ENCODE measurements at regions of chr19 and their contacts with region 1.

Region 1: GRCh38 chr19:40716655-40717324 is at the starts of genes COQ8B and ITPKC:
- DNase-seq: peak; percentile 100
- ATAC-seq: peak; percentile 70
- H3K4me3 Mint-ChIP-seq: peak within 1 kb of the TSS; percentile 90
- H3K27ac Mint-ChIP-seq: peak within 1 kb of the TSS; percentile 95
- H3K4me1 Mint-ChIP-seq: peaks cover 63% of the 10 kb centered on the region
- H3K27me3 Mint-ChIP-seq: no peaks in the 10 kb centered on the region
- CTCF ChIP-seq: no peak
- total RNA-seq, gene COQ8B: 34.4 and 38.5 TPM in 2 replicates
- total RNA-seq, gene ITPKC: 13.0 and 13.3 TPM in 2 replicates

Region 2: DNA sequence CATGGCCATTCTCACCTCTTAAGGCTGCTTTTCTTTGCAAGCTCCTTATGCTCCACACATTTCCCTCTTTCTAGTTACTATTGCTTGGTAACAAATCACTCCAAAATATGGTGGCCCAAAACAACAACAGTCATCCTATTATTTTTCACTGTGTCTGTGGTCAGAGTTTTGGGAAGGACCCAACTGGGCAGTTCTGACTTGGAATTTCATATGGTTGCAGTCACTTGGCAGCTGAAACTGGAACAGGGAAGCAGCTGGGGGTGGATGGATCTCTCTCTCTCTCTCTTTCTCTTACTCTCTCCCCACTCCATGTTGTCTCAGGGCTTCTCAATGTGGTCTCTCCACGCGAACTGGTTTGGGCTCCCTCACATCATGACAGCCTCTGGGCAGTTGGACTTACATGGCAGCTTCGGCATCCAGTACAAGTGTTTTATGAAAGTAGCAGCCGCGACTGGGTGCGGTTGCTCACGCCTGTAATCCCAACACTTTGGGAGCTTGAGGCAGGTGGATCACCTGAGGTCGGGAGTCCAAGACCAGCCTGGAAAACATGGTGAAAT is 66.0 kb before region 1 on chr19:
- CTCF ChIA-PET with region 1: no interaction called
- POLR2A ChIA-PET with region 1: no interaction called
- intact Hi-C with region 1: no loop called
- DNase-seq: no peak
- ATAC-seq: no peak
- H3K4me3 Mint-ChIP-seq: no peak overlapping the region
- H3K27ac Mint-ChIP-seq: no peak overlapping the region
- H3K4me1 Mint-ChIP-seq: peaks cover 2% of the 10 kb centered on the region
- H3K27me3 Mint-ChIP-seq: peaks cover 4% of the 10 kb centered on the region
- CTCF ChIP-seq: no peak

Region 3: DNA sequence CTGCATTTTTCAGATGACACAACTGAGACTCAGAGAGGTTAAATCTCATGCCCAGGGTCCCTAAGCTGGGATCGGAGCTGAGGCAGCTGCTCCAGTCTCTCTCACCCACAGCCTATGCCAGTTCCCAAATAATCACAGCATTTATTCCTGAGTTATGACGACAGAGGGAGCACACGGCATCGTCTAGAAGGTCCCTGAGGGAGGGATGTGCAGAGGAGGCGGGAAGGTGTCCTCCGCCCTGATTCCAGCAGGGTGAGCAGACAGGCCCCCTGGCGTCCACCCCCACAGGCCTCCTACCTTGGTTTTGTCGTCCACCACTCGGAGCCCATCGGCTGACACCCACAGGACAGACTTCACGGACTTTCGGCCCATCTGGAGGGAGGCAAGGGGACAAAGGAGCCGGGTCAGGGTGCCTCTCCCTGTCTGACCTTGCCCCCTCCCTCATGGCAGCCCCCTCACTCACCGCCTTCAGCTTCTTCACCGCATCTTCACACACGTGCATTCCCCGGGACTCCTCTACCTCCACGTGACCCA is 34.3 kb before region 1 on chr19:
- CTCF ChIA-PET with region 1: no interaction called
- POLR2A ChIA-PET with region 1: interaction called, 3 read pairs
- intact Hi-C with region 1: loop called (anchors 5 kb)
- DNase-seq: no peak
- ATAC-seq: no peak
- H3K4me3 Mint-ChIP-seq: no peak overlapping the region
- H3K27ac Mint-ChIP-seq: no peak overlapping the region
- H3K4me1 Mint-ChIP-seq: peaks cover 3% of the 10 kb centered on the region
- H3K27me3 Mint-ChIP-seq: no peaks in the 10 kb centered on the region
- CTCF ChIP-seq: no peak

Region 4: DNA sequence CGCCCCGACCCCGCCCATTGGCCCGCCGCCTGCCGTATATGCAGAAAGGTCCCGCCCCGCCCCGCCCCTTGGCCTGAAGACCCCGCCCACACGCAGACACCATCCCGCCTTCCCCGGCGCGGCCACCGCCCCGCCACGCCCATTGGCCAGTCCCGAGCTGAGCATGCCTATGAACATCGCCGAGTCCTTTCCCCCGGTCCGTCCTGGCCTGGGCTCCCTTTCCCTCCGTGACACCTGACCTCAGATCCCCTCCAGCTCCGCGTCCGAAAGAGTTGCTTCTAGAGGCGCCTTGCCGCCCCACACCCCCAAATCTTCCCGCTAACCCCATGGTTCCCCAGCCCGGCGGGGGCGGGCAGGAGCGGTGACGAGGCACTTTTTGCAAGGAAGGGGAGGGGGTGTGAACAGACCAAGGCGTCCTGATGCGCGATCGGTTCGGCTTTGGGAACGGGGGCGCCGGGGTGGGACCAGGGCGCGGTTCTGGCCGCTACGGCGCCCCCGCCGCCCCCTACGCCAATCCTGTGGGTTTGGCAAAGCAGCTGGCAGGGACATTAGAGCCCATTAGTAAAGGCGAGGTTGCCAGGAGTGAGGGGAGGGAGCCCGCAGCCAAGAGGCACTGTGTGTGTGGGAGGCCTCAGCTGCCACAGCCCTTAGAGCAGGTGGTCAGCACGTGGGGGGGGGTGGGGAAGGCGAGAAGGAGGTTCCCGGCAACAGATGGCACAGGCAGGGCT is 25.9 kb before region 1 on chr19:
- CTCF ChIA-PET with region 1: no interaction called
- POLR2A ChIA-PET with region 1: interaction called, 14 read pairs
- intact Hi-C with region 1: loop called (anchors 1 kb)
- DNase-seq: peak; percentile 76
- ATAC-seq: peak; percentile 78
- H3K4me3 Mint-ChIP-seq: peak overlapping the region; percentile 95
- H3K27ac Mint-ChIP-seq: peak overlapping the region; percentile 89
- H3K4me1 Mint-ChIP-seq: peaks cover 16% of the 10 kb centered on the region
- H3K27me3 Mint-ChIP-seq: no peaks in the 10 kb centered on the region
- CTCF ChIP-seq: no peak